ENCODE measurements at regions of chr1 and their contacts with region 1.

Region 1: DNA sequence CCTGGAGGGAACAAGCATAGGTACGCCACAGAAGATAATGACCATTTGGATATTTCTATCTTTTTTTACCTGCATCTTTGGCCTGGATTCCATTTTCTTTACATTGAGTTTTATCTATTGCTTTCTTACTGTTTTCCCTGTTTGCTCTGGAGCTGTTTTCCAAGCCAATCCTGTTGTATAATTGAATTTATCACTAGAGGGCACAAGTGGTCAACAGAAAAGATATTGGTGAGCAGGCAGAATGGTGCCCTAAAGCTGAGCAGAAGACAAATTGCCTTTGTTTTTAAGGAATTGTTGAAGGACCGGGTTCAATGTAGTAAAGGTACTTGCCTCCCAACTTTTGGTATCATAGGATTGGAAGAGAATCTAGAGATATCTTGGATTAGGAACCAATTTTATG is 152.8 kb downstream of the PPP1R12B start:
- DNase-seq: no peak
- H3K4me3 ChIP-seq: no peak overlapping the region
- H3K27ac ChIP-seq: peak overlapping the region in 3 of 4 donors; percentile 58 to 93 (median 92)
- H3K4me1 ChIP-seq: peaks cover 0 to 62% (median 22%) of the 10 kb centered on the region in 4 donors
- H3K27me3 ChIP-seq: no peaks in the 10 kb centered on the region
- CTCF ChIP-seq: peak in 3 of 4 experiments; percentile 45 to 63 (median 47)
- EP300 ChIP-seq: no peak
- POLR2A ChIP-seq: no peak

Region 2: GRCh38 chr1:202471246-202471645 is 30.0 kb before region 1 on chr1:
- intact Hi-C with region 1: no loop called
- DNase-seq: no peak
- H3K4me3 ChIP-seq: no peak overlapping the region
- H3K27ac ChIP-seq: no peak overlapping the region
- H3K4me1 ChIP-seq: no peaks in the 10 kb centered on the region
- H3K27me3 ChIP-seq: no peaks in the 10 kb centered on the region
- CTCF ChIP-seq: no peak
- EP300 ChIP-seq: no peak
- POLR2A ChIP-seq: no peak

Region 3: DNA sequence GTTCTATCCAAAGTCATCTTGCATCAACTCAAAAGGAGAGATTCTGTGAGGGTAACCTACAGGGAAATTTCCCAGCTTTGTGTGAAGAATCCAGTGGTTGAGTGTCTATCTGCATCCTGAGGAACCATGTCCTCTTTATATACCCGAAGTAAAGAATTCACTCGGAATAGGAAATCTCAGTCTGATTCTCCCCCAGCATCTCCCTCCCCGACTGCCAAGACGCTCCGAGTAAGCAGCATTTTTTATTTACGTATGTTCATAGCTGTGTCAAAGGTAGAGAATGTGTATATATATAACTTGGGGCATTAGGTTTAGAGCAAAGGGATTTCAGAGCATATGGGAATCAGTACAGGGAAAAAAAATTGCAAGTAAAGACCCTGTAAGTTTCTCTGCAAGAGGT is 38.7 kb after region 1 on chr1:
- intact Hi-C with region 1: loop called (anchors 5 kb)
- DNase-seq: no peak
- H3K4me3 ChIP-seq: peak overlapping the region; percentile 58 to 60 (median 59)
- H3K27ac ChIP-seq: peak overlapping the region; percentile 84 to 94 (median 89)
- H3K4me1 ChIP-seq: peaks cover 0 to 26% (median 14%) of the 10 kb centered on the region in 4 donors
- H3K27me3 ChIP-seq: no peaks in the 10 kb centered on the region
- CTCF ChIP-seq: no peak
- EP300 ChIP-seq: no peak
- POLR2A ChIP-seq: no peak

Region 4: GRCh38 chr1:202571347-202572339 is 70.4 kb after region 1 on chr1:
- intact Hi-C with region 1: loop called (anchors 2 kb)
- DNase-seq: no peak
- H3K4me3 ChIP-seq: no peak overlapping the region
- H3K27ac ChIP-seq: peak overlapping the region; percentile 78 to 94 (median 85)
- H3K4me1 ChIP-seq: peaks cover 0 to 100% (median 98%) of the 10 kb centered on the region in 4 donors
- H3K27me3 ChIP-seq: no peaks in the 10 kb centered on the region
- CTCF ChIP-seq: peak; percentile 25 to 70 (median 64)
- EP300 ChIP-seq: no peak
- POLR2A ChIP-seq: no peak

Region 5: DNA sequence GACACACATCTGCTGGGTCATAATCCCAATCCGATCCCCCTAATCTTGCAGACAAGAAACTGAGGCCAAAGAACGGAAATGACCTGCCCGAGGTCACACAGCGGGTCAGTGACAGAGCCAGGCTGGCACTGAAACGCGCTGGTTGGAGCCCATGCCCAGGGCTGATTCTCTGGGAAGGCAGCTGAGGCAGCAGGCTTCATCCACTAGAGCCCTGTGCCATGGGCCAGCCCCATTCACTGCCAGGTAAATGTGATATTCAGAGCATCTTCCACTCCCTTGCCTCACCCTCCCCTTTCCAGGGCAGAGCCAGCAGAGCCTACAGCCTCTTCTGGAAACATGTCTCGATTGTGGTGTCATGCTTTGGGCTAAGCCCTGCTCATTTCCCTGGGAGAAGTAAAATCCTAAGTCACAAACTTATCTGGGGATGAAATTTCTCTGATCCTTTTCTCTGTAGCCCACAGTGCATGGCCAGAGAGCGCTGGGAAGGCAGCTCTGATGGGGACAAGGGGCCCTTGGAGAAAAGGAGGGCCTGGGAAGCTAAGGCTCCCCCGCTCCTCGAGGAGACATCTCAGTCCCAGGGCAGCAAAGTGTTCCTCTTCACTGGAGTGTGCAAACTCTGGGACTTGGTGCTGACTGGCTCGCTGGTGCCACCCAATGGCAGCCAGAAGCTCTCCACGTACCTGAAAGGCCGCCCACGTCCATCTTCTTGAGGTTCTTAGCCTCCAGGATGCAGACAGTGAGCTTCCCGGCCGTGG is 98.6 kb after region 1 on chr1:
- intact Hi-C with region 1: loop called (anchors 2 kb)
- DNase-seq: peak; percentile 87
- H3K4me3 ChIP-seq: no peak overlapping the region
- H3K27ac ChIP-seq: peak overlapping the region in 3 of 4 donors; percentile 56 to 65 (median 59)
- H3K4me1 ChIP-seq: peaks cover 0 to 13% (median 7%) of the 10 kb centered on the region in 4 donors
- H3K27me3 ChIP-seq: no peaks in the 10 kb centered on the region
- CTCF ChIP-seq: peak; percentile 67 to 83 (median 76)
- EP300 ChIP-seq: no peak
- POLR2A ChIP-seq: no peak

Region 6: DNA sequence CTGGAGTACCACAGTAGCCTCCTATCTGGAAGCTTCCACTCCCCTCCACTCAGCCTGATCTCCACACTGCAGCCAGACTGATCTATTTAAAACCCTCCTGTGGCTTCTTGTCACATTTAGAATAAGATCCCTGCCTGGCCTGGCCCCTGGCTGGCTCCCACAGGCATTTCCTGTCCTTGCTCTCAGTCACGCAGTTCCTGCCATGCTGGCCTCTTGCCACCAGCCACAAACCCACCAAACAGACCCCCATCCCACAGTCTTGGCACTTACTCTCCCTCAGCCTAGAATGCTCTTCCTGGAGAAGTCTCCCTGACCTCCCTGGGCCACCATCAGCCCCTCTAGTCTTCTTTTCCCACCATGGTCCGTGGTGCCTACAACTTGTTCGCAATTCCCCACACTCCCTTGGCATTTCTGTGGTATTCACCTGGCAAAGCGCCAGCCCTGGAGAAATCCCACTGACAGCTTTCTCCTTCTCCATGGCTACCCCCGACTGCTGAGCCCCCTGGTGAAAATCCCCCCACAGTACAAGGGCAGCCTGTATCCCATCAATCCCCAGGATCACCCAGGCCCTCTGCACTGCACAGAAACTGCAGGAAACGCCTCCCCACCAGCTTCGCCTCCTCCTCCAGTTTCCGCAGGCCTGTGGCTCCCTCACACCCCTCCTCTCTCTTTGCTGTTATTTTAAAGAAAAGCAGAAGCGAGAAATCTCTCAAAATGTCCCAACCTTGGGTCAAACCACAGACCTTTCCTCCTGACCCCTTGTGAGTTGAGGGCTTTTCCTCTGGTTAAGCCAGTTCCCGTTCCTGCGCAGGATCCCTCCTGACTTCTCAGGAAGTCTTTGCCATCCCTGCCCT is 114.4 kb after region 1 on chr1:
- intact Hi-C with region 1: loop called (anchors 5 kb)
- DNase-seq: no peak
- H3K4me3 ChIP-seq: no peak overlapping the region
- H3K27ac ChIP-seq: peak overlapping the region; percentile 20 to 70 (median 56)
- H3K4me1 ChIP-seq: peaks cover 0 to 46% (median 41%) of the 10 kb centered on the region in 4 donors
- H3K27me3 ChIP-seq: no peaks in the 10 kb centered on the region
- CTCF ChIP-seq: no peak
- EP300 ChIP-seq: no peak
- POLR2A ChIP-seq: no peak

Region 7: DNA sequence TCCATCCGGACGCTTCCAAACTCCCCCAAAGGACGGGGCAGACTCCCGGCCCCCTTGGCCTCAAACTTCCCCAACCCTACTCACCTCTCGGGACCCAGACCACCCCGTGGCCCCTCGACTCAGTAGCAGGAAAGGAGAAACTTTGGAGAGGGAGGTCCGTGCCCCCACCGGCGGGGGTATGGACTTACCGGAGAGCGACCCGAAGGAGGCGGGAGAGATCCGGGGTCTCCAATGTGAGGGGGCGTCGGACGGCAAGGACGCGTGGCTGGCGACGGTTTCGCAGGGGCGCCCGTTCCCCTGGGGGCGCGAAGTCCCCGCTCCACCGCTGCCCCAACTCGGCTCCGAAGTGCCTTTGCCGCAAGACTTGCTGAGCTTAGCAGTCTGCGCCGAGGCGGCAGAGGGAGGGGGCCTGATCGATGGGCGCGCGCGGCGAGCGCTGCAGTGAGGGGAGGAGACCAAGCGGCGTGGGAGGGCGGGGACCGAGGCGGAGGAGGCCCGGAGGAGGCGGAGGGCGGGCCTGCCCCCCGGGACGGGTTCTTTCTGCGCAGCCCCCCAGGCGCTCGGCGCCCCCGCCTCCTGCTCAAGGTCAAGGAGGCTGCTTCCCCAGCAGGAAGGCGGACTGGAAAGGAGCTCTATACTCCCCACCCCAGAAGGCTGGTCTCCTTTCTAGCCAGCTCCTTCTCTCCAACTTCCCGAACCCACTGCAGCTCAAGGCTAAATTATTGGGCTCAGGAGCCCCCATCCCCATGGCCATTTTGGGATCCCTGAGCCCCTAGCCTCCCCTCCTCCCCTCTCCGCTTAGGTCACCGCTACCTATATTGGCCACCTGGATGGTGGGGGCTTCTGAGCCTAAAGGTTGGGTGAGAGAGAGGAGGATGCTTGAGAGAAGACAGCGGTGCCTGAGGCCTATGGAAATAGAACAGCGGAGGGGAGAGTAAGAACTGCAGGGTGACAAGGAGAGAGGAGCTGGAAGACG is 209.1 kb after region 1 on chr1 and contains the start of gene SYT2:
- intact Hi-C with region 1: loop called (anchors 10 kb)
- DNase-seq: peak; percentile 63
- H3K4me3 ChIP-seq: peak within 1 kb of the TSS in 3 of 4 donors; percentile 24 to 43 (median 36)
- H3K27ac ChIP-seq: no peak within 1 kb of the TSS
- H3K4me1 ChIP-seq: peaks cover 0 to 19% (median 17%) of the 10 kb centered on the region in 4 donors
- H3K27me3 ChIP-seq: peaks cover 28 to 75% (median 35%) of the 10 kb centered on the region in 3 donors
- CTCF ChIP-seq: no peak
- EP300 ChIP-seq: no peak
- POLR2A ChIP-seq: no peak
- total RNA-seq, gene SYT2: 0.16 TPM in 1 of 4 donors, not detected in the others

Region 8: GRCh38 chr1:203112301-203112874 is 611.1 kb after region 1 on chr1:
- intact Hi-C with region 1: no loop called
- DNase-seq: no peak
- H3K4me3 ChIP-seq: no peak overlapping the region
- H3K27ac ChIP-seq: no peak overlapping the region
- H3K4me1 ChIP-seq: no peaks in the 10 kb centered on the region
- H3K27me3 ChIP-seq: peaks cover 0 to under 1% (median 0%) of the 10 kb centered on the region in 3 donors
- CTCF ChIP-seq: no peak
- EP300 ChIP-seq: no peak
- POLR2A ChIP-seq: no peak

Measured in sigmoid colon (tissue), 7 donors.